ENCODE measurements at regions of chr1 and their contacts with region 1.

Region 1: DNA sequence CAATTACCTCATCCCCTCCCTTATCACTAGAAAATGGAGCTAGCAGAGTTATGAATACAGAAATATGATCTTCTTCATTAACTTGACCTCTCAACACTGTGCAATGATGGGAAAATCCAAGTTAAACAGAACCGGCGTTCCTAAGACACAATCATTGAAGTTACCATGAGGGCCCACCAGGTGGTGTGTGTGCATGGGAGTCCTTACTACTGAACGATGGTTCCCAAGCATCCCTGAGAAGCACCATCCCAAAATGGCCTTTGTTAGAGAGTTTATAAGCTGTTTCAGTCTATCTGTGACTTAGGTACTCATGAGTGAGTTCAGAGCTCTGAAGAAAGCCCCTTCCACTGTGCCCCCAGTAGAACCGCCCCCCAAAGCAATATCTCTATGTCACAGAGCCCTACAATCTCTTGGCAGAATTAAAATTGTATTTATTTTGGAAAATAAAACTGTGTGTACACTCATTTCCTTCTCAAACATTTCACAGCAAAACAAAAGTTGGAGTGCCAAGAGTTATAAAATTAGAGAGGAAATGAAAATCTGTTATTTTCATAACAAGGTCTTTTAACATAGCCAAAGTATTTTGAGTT is 56.8 kb downstream of the PLD5 start:
- DNase-seq: peak; percentile 88
- H3K4me3 Mint-ChIP-seq: no peak overlapping the region
- H3K27ac Mint-ChIP-seq: no peak overlapping the region
- H3K4me1 Mint-ChIP-seq: peaks cover 6% of the 10 kb centered on the region
- H3K27me3 Mint-ChIP-seq: no peaks in the 10 kb centered on the region
- CTCF ChIP-seq: peak; percentile 97

Region 2: DNA sequence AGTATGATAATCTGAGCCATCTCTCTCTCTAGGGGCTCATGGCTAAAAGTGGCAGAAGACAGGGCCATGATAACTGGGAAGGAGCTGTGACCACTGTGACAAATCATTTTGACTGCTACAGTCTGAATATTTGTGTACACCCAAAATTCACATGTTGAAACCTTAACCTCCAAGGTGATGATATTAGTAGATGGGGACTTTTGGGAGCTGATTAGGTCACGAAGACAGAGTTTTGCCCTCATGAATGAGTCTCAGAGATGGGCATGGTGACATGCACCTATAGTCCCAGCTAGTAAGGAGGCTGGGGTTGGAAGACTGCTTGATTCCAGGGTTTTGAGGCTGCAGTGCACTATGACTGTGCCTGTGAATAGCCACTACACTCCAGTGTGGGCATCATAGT is 118.0 kb before region 1 on chr1:
- CTCF ChIA-PET with region 1: no interaction called
- POLR2A ChIA-PET with region 1: no interaction called
- intact Hi-C with region 1: no loop called
- DNase-seq: no peak
- H3K4me3 Mint-ChIP-seq: no peak overlapping the region
- H3K27ac Mint-ChIP-seq: no peak overlapping the region
- H3K4me1 Mint-ChIP-seq: no peaks in the 10 kb centered on the region
- H3K27me3 Mint-ChIP-seq: no peaks in the 10 kb centered on the region
- CTCF ChIP-seq: no peak

Region 3: GRCh38 chr1:242477944-242478343 is 10.3 kb after region 1 on chr1:
- CTCF ChIA-PET with region 1: interaction called, 20 read pairs
- POLR2A ChIA-PET with region 1: interaction called, 4 read pairs
- intact Hi-C with region 1: no loop called
- DNase-seq: no peak
- H3K4me3 Mint-ChIP-seq: no peak overlapping the region
- H3K27ac Mint-ChIP-seq: no peak overlapping the region
- H3K4me1 Mint-ChIP-seq: no peaks in the 10 kb centered on the region
- H3K27me3 Mint-ChIP-seq: no peaks in the 10 kb centered on the region
- CTCF ChIP-seq: no peak

Region 4: DNA sequence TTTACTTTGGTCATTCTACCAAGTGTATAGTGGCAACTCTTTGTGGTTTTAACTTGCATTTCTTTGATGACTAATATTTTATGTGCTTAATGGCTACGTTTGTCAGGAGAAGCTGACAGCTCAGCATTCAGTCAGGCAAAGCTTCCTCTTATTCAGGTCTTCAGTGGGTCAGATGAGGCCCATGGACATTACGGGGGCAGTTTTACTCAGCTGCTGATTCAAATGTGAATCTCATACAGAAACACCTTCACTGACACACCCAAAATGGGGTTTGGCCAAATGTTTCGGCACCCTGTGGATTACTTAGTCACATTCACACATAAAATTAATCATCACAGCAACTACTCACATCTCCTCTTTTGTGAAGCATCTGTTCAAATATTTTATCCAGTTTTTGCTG is 161.7 kb after region 1 on chr1:
- CTCF ChIA-PET with region 1: interaction called, 3 read pairs
- POLR2A ChIA-PET with region 1: no interaction called
- intact Hi-C with region 1: loop called (anchors 5 kb)
- DNase-seq: peak; percentile 85
- H3K4me3 Mint-ChIP-seq: no peak overlapping the region
- H3K27ac Mint-ChIP-seq: peak overlapping the region; percentile 77
- H3K4me1 Mint-ChIP-seq: peaks cover 14% of the 10 kb centered on the region
- H3K27me3 Mint-ChIP-seq: no peaks in the 10 kb centered on the region
- CTCF ChIP-seq: no peak

Region 5: GRCh38 chr1:242788771-242789170 is 321.1 kb after region 1 on chr1:
- CTCF ChIA-PET with region 1: interaction called, 16 read pairs
- POLR2A ChIA-PET with region 1: no interaction called
- intact Hi-C with region 1: loop called (anchors 5 kb)
- DNase-seq: no peak
- H3K4me3 Mint-ChIP-seq: no peak overlapping the region
- H3K27ac Mint-ChIP-seq: no peak overlapping the region
- H3K4me1 Mint-ChIP-seq: peaks cover 22% of the 10 kb centered on the region
- H3K27me3 Mint-ChIP-seq: no peaks in the 10 kb centered on the region
- CTCF ChIP-seq: no peak

Region 6: GRCh38 chr1:243325305-243325890 is 857.7 kb after region 1 on chr1:
- CTCF ChIA-PET with region 1: interaction called, 3 read pairs
- POLR2A ChIA-PET with region 1: no interaction called
- intact Hi-C with region 1: loop called (anchors 1 kb)
- DNase-seq: peak; percentile 82
- H3K4me3 Mint-ChIP-seq: no peak overlapping the region
- H3K27ac Mint-ChIP-seq: no peak overlapping the region
- H3K4me1 Mint-ChIP-seq: no peaks in the 10 kb centered on the region
- H3K27me3 Mint-ChIP-seq: no peaks in the 10 kb centered on the region
- CTCF ChIP-seq: peak; percentile 97

Region 7: DNA sequence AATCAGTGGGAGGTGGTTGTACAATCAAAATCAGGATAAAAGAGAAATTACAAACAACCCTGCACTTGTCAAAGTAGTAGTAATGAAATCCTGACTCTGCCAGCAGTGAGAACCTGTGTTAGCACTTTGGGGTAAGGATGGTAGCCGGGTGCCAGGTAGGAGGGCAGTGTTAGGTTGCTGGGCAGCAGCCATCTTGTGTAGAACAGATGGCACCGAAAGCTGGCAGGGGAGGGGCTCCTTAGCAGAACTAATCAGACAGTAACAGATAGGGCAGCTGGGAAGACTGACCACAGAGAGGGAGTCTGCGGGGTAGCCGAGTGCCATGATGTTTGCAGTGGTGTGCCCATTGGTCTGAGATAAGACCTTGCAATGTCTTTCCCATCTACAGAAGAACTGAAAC is 925.4 kb after region 1 on chr1:
- CTCF ChIA-PET with region 1: no interaction called
- POLR2A ChIA-PET with region 1: no interaction called
- intact Hi-C with region 1: no loop called
- DNase-seq: no peak
- H3K4me3 Mint-ChIP-seq: no peak overlapping the region
- H3K27ac Mint-ChIP-seq: no peak overlapping the region
- H3K4me1 Mint-ChIP-seq: no peaks in the 10 kb centered on the region
- H3K27me3 Mint-ChIP-seq: no peaks in the 10 kb centered on the region
- CTCF ChIP-seq: no peak

Measured in MCF 10A (cell line).